ENCODE measurements at regions of chr6 and their contacts with region 1.

Region 1: DNA sequence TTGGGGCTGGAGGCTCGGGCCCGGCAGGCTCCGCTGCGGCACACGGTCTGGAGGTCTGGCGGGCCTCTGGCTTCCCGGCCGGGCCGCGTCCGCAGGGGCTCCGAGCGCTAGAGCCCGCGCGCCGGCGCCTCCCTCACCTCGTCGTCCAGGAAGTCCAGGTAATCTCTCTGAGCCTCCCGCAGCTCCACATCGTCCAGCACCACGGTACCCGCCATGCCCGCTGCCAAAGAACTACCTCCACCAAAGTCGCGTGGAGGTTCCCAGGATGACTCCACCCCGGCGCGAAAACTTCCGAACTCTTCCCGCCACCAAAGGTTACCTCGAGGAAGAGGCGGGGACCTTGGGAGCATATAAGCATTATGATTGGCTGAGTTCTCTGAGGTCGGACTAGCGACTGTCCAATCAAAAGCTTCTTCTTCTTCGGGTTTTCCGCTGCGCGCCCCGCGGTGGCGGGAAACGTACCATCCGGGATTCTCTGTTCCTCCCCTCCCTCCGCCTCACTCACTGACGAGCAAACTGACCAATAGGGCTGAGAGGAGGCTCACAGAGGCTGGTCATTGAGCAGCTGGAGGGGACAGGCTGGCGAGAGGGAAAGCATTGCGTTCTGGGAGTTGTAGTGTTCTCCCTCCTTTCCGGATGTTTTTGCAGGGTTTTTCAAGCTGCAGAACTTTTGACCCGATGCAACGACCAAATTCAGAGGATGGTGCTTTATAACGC is at the start of gene MCM3:
- DNase-seq: peak; percentile 97 to 98
- H3K4me3 ChIP-seq: peak within 1 kb of the TSS; percentile 72
- H3K27ac ChIP-seq: peak within 1 kb of the TSS; percentile 49
- H3K4me1 ChIP-seq: peaks cover 21% of the 10 kb centered on the region
- H3K27me3 ChIP-seq: no peaks in the 10 kb centered on the region
- CTCF ChIP-seq: no peak
- total RNA-seq, gene MCM3: 90.9 and 111 TPM in 2 replicates

Region 2: DNA sequence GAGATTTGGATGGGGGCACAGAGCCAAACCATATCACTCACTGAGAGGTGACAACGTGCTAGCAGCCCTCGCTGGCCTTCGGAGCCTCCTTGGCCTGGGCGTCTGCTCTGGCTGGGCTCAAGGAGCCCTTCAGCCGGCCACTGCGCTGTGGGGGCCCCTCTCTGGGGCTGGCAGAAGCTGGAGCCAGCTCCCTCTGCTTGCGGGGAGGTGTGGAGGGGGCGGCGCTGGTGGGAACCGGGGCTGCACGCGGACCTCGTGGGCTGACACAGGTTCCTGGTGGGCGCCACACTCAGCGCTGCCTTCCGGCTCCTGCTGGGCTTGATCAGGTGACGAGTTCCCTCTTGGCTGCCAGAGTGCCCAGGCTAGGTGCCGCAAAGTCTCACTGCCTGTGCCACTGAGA is 686.4 kb before region 1 on chr6:
- CTCF ChIA-PET with region 1: no interaction called
- POLR2A ChIA-PET with region 1: no interaction called
- intact Hi-C with region 1: no loop called
- DNase-seq: no peak
- H3K4me3 ChIP-seq: no peak overlapping the region
- H3K27ac ChIP-seq: no peak overlapping the region
- H3K4me1 ChIP-seq: no peaks in the 10 kb centered on the region
- H3K27me3 ChIP-seq: no peaks in the 10 kb centered on the region
- CTCF ChIP-seq: no peak

Region 3: DNA sequence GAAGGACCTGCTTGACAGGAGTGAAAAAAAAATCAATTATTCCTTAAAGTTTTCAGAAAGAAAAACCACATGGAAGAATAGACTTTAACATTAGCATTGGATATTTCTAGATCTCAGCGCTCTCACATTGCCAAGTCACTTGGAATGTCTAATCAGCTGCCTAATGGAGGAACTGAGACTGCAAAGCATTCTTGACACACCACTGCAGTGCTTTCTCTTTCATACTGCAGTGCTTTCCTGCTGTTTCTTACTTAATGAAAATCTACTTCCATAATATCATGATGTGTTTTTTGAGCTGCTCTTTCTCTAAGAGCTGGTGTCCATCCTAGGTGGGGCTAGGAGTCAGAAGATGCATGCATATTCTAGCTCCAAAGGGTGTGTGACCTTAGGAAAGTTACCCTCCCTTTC is 20.4 kb after region 1 on chr6:
- CTCF ChIA-PET with region 1: no interaction called
- POLR2A ChIA-PET with region 1: no interaction called
- intact Hi-C with region 1: no loop called
- DNase-seq: no peak
- H3K4me3 ChIP-seq: no peak overlapping the region
- H3K27ac ChIP-seq: no peak overlapping the region
- H3K4me1 ChIP-seq: no peaks in the 10 kb centered on the region
- H3K27me3 ChIP-seq: no peaks in the 10 kb centered on the region
- CTCF ChIP-seq: no peak

Region 4: GRCh38 chr6:52352239-52353008 is 67.8 kb after region 1 on chr6:
- CTCF ChIA-PET with region 1: interaction called, 9 read pairs
- POLR2A ChIA-PET with region 1: no interaction called
- intact Hi-C with region 1: loop called (anchors 1 kb)
- DNase-seq: peak; percentile 75 to 100
- H3K4me3 ChIP-seq: peak overlapping the region; percentile 8; the same call in 1 of the 2 replicates
- H3K27ac ChIP-seq: peak overlapping the region; percentile 97
- H3K4me1 ChIP-seq: peaks cover 30% of the 10 kb centered on the region
- H3K27me3 ChIP-seq: no peaks in the 10 kb centered on the region
- CTCF ChIP-seq: no peak

Region 5: DNA sequence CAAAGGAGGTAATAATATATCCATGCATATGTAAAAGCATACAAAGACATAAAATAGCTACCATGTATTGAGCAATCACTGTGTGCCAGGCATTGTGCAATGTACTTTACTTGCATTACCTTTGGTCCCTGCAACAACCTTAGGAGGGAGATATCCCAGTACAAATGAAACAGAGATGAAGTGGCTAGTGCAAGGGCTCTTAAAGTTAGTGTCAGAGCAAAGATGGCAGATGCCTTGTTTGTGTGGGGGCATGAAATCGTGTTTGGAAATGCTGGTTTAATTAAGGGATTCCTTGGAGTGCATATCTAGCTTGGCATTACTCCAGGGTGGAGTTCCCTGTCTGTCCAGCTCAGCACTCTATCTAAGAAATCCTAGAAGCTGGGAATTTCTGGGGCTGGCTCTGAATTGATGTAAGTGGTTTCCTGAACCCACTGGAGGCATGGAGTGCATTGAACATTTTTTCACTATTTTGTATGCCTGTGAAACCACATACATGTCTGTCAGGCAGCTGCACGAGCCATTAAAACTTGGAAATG is 87.1 kb after region 1 on chr6:
- CTCF ChIA-PET with region 1: no interaction called
- POLR2A ChIA-PET with region 1: no interaction called
- intact Hi-C with region 1: no loop called
- DNase-seq: no peak
- H3K4me3 ChIP-seq: no peak overlapping the region
- H3K27ac ChIP-seq: no peak overlapping the region
- H3K4me1 ChIP-seq: no peaks in the 10 kb centered on the region
- H3K27me3 ChIP-seq: no peaks in the 10 kb centered on the region
- CTCF ChIP-seq: no peak

Region 6: DNA sequence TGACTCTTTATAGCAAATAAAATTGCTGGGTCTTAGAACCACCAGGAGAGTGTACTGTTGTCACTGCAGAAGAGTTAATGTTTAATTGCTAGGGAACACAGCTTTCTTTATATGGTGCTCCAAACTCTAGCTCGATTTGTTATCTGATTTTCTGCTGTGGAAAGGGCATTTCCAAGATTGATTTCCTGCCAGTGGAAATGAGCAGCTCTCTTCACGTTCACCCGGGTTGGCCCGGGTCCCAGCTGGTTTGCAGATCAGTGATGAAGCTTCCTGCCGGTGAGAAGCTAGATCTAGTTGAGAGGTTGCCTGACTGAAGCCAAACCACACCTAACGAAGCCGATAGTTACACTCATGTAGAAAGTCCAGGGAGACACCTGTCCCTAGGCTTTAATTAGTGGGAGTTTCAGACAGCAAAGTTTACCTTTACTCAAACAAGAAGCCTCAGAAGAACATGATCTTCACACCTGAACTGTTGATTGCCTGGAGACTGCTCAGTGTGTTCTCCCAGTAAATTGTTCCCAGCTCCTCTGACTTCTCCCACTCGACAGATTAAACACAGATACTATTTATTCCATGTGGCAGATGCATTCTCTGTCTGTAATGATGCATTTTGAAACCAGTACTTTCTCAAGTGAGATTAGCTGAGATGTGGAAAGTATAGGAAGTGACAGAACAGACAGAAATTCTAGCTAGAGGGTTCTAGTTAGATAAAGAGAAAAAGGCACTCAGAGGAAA is 105.2 kb after region 1 on chr6:
- CTCF ChIA-PET with region 1: interaction called, 5 read pairs
- POLR2A ChIA-PET with region 1: no interaction called
- intact Hi-C with region 1: loop called (anchors 1 kb)
- DNase-seq: peak; percentile 28 to 46
- H3K4me3 ChIP-seq: peak overlapping the region; percentile 11; the same call in 1 of the 2 replicates
- H3K27ac ChIP-seq: peak overlapping the region; percentile 65
- H3K4me1 ChIP-seq: peaks cover 34% of the 10 kb centered on the region
- H3K27me3 ChIP-seq: no peaks in the 10 kb centered on the region
- CTCF ChIP-seq: no peak

Region 7: GRCh38 chr6:52399511-52400312 is 115.1 kb after region 1 on chr6:
- CTCF ChIA-PET with region 1: interaction called, 3 read pairs
- POLR2A ChIA-PET with region 1: no interaction called
- intact Hi-C with region 1: loop called (anchors 1 kb)
- DNase-seq: peak in 1 of 2 experiments; percentile 27
- H3K4me3 ChIP-seq: no peak overlapping the region
- H3K27ac ChIP-seq: no peak overlapping the region
- H3K4me1 ChIP-seq: 0 out of 2 replicates have a peak, but pooled peaks cover 6% of the 10 kb centered on the region
- H3K27me3 ChIP-seq: no peaks in the 10 kb centered on the region
- CTCF ChIP-seq: peak; percentile 95

Region 8: DNA sequence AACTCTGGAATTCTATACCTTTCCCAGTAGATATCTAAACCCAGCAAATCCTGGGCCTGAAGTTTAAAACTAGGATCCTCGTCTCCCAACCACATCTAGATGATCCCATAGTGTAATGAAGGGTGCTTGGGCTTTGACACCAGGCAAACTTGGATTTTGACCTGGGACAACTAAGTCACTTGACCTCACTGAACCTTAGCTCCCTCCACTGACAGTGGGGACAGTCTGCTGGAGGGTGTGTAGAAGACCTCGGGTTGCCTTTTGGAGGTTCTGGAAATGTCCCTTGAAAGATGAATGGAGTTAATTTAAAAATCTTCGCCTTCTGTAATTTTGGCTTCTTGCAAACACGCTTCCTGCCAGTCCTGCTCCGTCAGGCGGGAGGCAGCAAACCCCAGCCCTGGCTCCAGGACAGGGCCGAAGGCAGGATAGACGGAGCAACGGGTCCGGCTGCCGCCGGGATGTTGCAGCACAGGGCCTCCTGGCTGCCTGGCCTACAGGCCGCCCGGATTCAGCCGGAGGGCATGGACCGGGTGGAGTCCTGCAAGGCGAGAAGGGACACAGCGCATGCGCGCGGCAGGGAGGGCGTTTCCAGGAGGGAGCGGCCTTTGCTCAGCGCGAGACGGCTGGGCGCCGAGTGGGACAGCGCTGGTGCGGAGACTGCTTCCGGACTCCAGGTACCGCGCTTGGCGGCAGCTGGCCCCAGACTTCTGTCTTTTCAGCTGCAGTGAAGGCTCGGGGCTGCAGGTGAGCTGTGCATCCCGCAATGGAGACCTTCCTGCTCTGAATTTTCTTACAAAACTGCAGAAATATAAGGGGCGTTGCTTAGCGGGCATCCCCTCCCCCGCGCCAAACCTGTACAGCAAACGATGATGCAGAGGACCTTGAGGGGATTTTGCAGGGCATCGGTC is 386.1 kb after region 1 on chr6 and contains the start of gene TMEM14A:
- CTCF ChIA-PET with region 1: no interaction called
- POLR2A ChIA-PET with region 1: no interaction called
- intact Hi-C with region 1: loop called (anchors 2 kb)
- DNase-seq: peak; percentile 85 to 96
- H3K4me3 ChIP-seq: peak within 1 kb of the TSS; percentile 69
- H3K27ac ChIP-seq: no peak within 1 kb of the TSS
- H3K4me1 ChIP-seq: peaks cover 22% of the 10 kb centered on the region
- H3K27me3 ChIP-seq: no peaks in the 10 kb centered on the region
- CTCF ChIP-seq: no peak
- total RNA-seq, gene TMEM14A: 48.9 and 75.2 TPM in 2 replicates

Measured in PC-9 (cell line).